ENCODE measurements at regions of chr7 and their contacts with region 1.

Region 1: GRCh38 chr7:149497456-149498261 is at the start of gene ZNF746:
- DNase-seq: peak; percentile 78
- H3K4me3 Mint-ChIP-seq: peak within 1 kb of the TSS; percentile 99
- H3K27ac Mint-ChIP-seq: peak within 1 kb of the TSS; percentile 96
- H3K4me1 Mint-ChIP-seq: peaks cover 43% of the 10 kb centered on the region
- H3K27me3 Mint-ChIP-seq: no peaks in the 10 kb centered on the region
- total RNA-seq, gene ZNF746: 27.7 and 28.1 TPM in 2 replicates

Region 2: DNA sequence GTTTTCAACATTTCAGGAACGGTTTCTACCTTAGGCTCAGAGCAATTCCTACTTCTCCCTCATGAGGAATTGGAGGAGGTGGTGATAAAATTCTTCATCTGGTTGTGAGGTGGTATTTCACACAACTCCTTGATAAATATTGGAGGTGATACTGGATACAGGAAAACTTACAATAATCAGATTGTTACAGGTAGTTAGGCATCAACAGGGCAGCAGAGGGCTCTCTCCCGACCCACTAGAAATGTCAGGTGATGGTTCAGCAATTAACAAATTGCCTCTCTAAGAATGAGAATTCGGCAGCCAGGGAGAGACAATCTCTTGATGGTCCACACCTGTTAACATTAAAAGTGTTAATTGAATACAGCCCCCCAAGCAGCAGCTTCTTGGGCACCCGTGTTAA is 429.8 kb before region 1 on chr7:
- intact Hi-C with region 1: loop called (anchors 5 kb)
- DNase-seq: no peak
- H3K4me3 Mint-ChIP-seq: peak overlapping the region; percentile 12
- H3K27ac Mint-ChIP-seq: no peak overlapping the region
- H3K4me1 Mint-ChIP-seq: peaks cover 8% of the 10 kb centered on the region
- H3K27me3 Mint-ChIP-seq: no peaks in the 10 kb centered on the region

Region 3: DNA sequence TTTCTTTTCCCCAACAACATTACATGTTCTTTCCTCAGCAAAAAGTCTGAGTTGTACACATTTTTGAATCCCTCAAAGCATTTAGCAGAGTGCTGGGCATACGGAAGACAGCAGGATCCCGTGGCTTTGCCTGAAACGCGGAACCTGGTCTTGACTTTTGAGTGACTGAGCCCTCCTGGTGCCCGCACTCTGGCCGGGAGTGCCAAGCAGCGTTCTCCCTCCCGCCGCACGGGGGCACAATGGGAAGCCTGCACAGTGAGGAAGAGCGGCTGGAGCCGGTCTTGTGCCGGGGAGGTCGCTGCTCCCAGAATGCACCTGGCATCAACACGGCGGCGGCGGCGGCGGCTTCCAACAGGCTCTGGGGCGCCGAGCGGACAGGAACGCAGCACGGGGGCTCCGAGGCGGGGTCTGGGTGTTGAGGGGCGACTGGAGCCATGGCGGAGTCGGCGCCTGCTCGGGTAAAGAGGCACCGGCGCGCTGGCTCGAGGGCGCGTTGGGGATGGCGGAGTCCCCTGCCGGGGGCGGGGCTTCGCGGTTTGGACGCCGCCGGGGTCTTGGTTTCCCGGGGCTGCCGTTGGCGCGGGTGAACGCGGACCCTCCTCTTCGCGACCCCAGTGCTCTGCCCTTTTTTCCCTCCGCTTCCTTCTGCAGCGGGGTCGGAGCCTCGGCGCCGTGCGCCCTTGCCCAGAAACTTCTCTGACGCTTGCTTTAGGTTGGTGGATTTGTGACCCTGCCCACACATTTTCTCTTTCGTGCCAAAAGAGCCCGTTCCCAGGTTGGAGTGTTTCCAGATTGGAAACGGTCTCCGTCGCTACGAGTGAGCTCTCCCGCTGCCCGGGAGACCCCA is 258.1 kb before region 1 on chr7 and contains the start of gene ZNF212:
- intact Hi-C with region 1: loop called (anchors 1 kb)
- DNase-seq: peak; percentile 84
- H3K4me3 Mint-ChIP-seq: peak within 1 kb of the TSS; percentile 92
- H3K27ac Mint-ChIP-seq: peak within 1 kb of the TSS; percentile 81
- H3K4me1 Mint-ChIP-seq: peaks cover 27% of the 10 kb centered on the region
- H3K27me3 Mint-ChIP-seq: no peaks in the 10 kb centered on the region
- total RNA-seq, gene ZNF212: 15.0 and 17.8 TPM in 2 replicates

Region 4: GRCh38 chr7:149422129-149422913 is 75.3 kb before region 1 on chr7:
- intact Hi-C with region 1: loop called (anchors 1 kb)
- DNase-seq: peak; percentile 73
- H3K4me3 Mint-ChIP-seq: peak overlapping the region; percentile 66
- H3K27ac Mint-ChIP-seq: peak overlapping the region; percentile 61
- H3K4me1 Mint-ChIP-seq: no peaks in the 10 kb centered on the region
- H3K27me3 Mint-ChIP-seq: peaks cover 4% of the 10 kb centered on the region

Region 5: GRCh38 chr7:149624419-149625339 is 127.0 kb after region 1 on chr7:
- intact Hi-C with region 1: loop called (anchors 1 kb)
- DNase-seq: peak; percentile 91
- H3K4me3 Mint-ChIP-seq: peak overlapping the region; percentile 89
- H3K27ac Mint-ChIP-seq: peak overlapping the region; percentile 83
- H3K4me1 Mint-ChIP-seq: peaks cover 32% of the 10 kb centered on the region
- H3K27me3 Mint-ChIP-seq: peaks cover 6% of the 10 kb centered on the region

Measured in activated T-helper 1 cell treated with anti-CD3 and anti-CD28 coated beads, Interleukin-12 subunit alpha, Interleukin-12 subunit beta, Interleukin-2, Interleukin-4 antibody, amounts not matched to agents 30 ng/mL and 10 ng/mL and 1 ng/mL, durations not matched to agents 14 hours and 24 hours and 36 hours (primary cell).